HepG2 (cell line): ENCODE measurements at regions of chrX and their contacts with region 1.

Region 1: DNA sequence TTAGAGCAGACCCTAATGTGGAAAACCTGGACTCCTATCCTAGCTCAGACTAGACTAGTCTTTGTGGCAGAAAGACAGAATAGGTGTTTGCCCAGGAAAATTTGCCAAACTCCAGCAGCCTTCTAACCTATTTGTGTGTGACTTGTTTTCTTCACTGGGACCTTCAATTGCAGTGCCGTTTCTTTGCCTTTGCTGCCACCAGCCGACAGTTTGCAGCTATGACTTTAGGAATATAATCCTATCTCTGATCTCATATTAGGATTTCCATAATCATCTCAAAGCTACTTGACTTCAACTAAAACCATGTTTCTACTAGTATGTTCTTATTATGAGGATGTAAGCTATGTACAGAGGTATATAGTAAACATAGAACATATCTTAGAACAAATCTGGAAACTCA is 60.2 kb upstream of the PGAM4 start:
- DNase-seq: peak; percentile 11
- ATAC-seq: peak; percentile 58
- H3K4me3 ChIP-seq: no peak overlapping the region
- H3K27ac ChIP-seq: no peak overlapping the region
- H3K4me1 ChIP-seq: peaks cover 1% of the 10 kb centered on the region; the same call in 1 of the 2 replicates
- H3K27me3 ChIP-seq: no peaks in the 10 kb centered on the region
- CTCF ChIP-seq: peak; percentile 69
- EP300 ChIP-seq: no peak
- POLR2A ChIP-seq: no peak
- RAD21 ChIP-seq: no peak

Region 2: GRCh38 chrX:76555814-76556213 is 1473.8 kb before region 1 on chrX:
- CTCF ChIA-PET with region 1: no interaction called
- POLR2A ChIA-PET with region 1: no interaction called
- in situ Hi-C with region 1: loop called (anchors 10 kb)
- intact Hi-C with region 1: no loop called
- DNase-seq: peak; percentile 41
- ATAC-seq: peak; percentile 55
- H3K4me3 ChIP-seq: no peak overlapping the region
- H3K27ac ChIP-seq: no peak overlapping the region
- H3K4me1 ChIP-seq: no peaks in the 10 kb centered on the region
- H3K27me3 ChIP-seq: no peaks in the 10 kb centered on the region
- CTCF ChIP-seq: 0 out of 2 replicates have a peak, but pooled peaks have one; percentile 17
- EP300 ChIP-seq: no peak
- POLR2A ChIP-seq: no peak
- RAD21 ChIP-seq: no peak

Region 3: GRCh38 chrX:77640702-77641101 is 389.0 kb before region 1 on chrX:
- CTCF ChIA-PET with region 1: no interaction called
- POLR2A ChIA-PET with region 1: no interaction called
- in situ Hi-C with region 1: no loop called
- intact Hi-C with region 1: no loop called
- DNase-seq: no peak
- ATAC-seq: no peak
- H3K4me3 ChIP-seq: no peak overlapping the region
- H3K27ac ChIP-seq: no peak overlapping the region
- H3K4me1 ChIP-seq: no peaks in the 10 kb centered on the region
- H3K27me3 ChIP-seq: no peaks in the 10 kb centered on the region
- CTCF ChIP-seq: no peak
- EP300 ChIP-seq: no peak
- POLR2A ChIP-seq: no peak
- RAD21 ChIP-seq: no peak

Region 4: DNA sequence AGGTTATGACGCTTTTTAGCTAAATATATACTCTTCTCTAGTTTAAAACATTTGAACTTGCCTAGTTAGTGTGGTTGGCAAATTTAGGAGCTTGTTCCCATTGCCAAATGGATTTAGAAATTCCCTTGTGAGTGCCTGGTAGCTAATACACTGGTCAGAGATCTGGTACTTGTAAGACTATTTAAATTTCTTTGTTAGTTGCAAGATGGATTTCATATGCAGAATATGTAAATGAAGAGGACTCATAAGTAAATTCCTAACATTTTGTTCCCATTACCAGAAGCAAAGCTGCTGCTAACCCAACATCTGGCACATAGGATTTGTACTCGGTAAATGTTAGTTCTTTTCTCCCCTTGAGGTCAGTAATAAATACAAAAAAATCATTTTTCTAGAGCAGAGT is 18.4 kb after region 1 on chrX:
- CTCF ChIA-PET with region 1: no interaction called
- POLR2A ChIA-PET with region 1: no interaction called
- in situ Hi-C with region 1: no loop called
- intact Hi-C with region 1: no loop called
- DNase-seq: no peak
- ATAC-seq: no peak
- H3K4me3 ChIP-seq: no peak overlapping the region
- H3K27ac ChIP-seq: no peak overlapping the region
- H3K4me1 ChIP-seq: no peaks in the 10 kb centered on the region
- H3K27me3 ChIP-seq: no peaks in the 10 kb centered on the region
- CTCF ChIP-seq: no peak
- EP300 ChIP-seq: no peak
- POLR2A ChIP-seq: no peak
- RAD21 ChIP-seq: no peak

Region 5: DNA sequence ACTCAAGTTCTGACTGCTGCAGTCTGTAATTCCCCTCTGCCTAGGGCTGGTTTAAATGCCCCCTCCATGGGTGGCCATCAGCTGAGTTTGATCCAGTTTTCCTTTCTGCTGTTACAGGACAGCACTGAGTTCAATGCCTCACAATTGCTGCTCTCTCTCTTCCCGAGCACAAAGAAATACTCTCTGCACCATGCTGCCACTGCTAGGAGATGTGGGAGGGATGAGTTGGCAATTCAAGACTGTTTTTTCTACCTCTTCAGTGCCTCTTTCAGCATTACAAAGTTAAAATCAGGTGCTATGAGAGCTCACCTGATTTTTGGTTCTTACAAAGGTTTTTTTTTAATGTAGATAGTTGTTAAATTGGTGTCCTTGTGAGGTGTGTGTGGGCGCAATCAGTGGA is 273.4 kb after region 1 on chrX:
- CTCF ChIA-PET with region 1: no interaction called
- POLR2A ChIA-PET with region 1: no interaction called
- in situ Hi-C with region 1: no loop called
- intact Hi-C with region 1: no loop called
- DNase-seq: no peak
- ATAC-seq: no peak
- H3K4me3 ChIP-seq: no peak overlapping the region
- H3K27ac ChIP-seq: no peak overlapping the region
- H3K4me1 ChIP-seq: no peaks in the 10 kb centered on the region
- H3K27me3 ChIP-seq: no peaks in the 10 kb centered on the region
- CTCF ChIP-seq: no peak
- EP300 ChIP-seq: no peak
- POLR2A ChIP-seq: no peak
- RAD21 ChIP-seq: no peak